Esophagus squamous epithelium (tissue), 5 donors: ENCODE measurements at regions of chr11 and their contacts with region 1.

Region 1: DNA sequence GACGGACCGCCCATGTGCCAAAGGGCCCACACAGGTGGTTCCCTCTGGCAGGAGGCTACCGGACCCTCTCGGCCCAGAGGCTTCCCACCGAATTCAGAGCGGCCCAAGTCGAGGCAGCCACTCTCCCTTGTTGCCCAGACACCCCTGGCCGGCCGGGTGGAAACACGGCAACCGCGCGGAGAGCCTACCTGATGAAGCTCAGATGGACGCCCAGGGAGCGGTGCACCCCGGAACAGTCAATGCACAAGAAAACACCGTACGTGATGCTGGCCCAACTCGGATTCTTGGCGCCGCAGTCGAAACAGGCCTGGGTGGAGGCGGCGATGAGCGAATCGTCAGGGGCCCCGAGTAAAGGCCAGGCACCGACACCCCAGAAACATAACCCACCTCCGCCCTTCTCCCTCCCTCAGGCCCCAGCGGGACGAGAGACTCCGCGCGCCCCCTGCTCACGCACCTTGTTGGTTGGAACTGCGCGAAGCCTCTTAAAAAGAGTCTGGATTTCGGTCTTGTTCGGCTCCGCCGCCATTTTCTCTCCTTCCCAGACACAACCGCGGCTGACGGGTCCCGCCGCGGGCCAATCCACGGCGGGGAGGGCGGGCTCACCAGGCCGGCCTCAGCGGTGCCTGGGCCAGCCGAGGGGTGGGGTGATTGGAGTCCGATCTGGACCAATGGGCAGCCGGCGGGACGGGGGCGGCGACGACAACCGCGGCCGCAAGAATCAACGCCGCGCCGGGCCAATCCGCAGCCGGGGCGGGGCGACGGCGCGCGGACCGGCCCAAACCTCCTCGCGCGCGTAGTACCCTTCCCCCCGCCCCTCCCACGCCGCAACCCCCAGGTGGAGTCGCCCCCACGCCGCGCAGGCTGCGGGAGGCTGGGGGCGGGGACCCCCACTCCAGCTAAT is at the start of gene ARFGAP2:
- DNase-seq: peak; percentile 90
- H3K4me3 ChIP-seq: peak within 1 kb of the TSS; percentile 83 to 95 (median 88)
- H3K27ac ChIP-seq: peak within 1 kb of the TSS; percentile 94 to 100 (median 99)
- H3K4me1 ChIP-seq: peaks cover 37 to 63% (median 38%) of the 10 kb centered on the region in 3 donors
- H3K27me3 ChIP-seq: no peaks in the 10 kb centered on the region
- CTCF ChIP-seq: no peak
- POLR2A ChIP-seq: peak in 3 of 4 donors; percentile 23 to 47 (median 26)
- total RNA-seq, gene ARFGAP2: 95.3 to 171 (median 119) TPM

Region 2: GRCh38 chr11:47259178-47259977 is 82.8 kb after region 1 on chr11:
- intact Hi-C with region 1: loop called (anchors 5 kb)
- DNase-seq: no peak
- H3K4me3 ChIP-seq: peak overlapping the region in 2 of 4 donors; percentile 7 to 24
- H3K27ac ChIP-seq: peak overlapping the region in 2 of 4 donors; percentile 13 to 60
- H3K4me1 ChIP-seq: peaks cover 28 to 57% (median 35%) of the 10 kb centered on the region in 3 donors
- H3K27me3 ChIP-seq: no peaks in the 10 kb centered on the region
- CTCF ChIP-seq: peak; percentile 37 to 67 (median 53)
- POLR2A ChIP-seq: no peak

Region 3: GRCh38 chr11:47355283-47356128 is 178.9 kb after region 1 on chr11:
- intact Hi-C with region 1: loop called (anchors 10 kb)
- DNase-seq: no peak
- H3K4me3 ChIP-seq: peak overlapping the region; percentile 30 to 69 (median 51)
- H3K27ac ChIP-seq: peak overlapping the region; percentile 57 to 76 (median 66)
- H3K4me1 ChIP-seq: peaks cover 3 to 14% (median 4%) of the 10 kb centered on the region in 3 donors
- H3K27me3 ChIP-seq: no peaks in the 10 kb centered on the region
- CTCF ChIP-seq: peak; percentile 78 to 98 (median 94)
- POLR2A ChIP-seq: no peak